H1 (cell line): ENCODE measurements at regions of chr14 and their contacts with region 1.

Region 1: GRCh38 chr14:100078991-100079725 is 13.9 kb downstream of the EVL start:
- DNase-seq: peak; percentile 17 to 71
- H3K4me3 ChIP-seq: no peak overlapping the region
- H3K27ac ChIP-seq: no peak overlapping the region
- H3K4me1 ChIP-seq: peaks cover 3 to 18% (median 4%) of the 10 kb centered on the region in 4 experiments; a peak in 6 of 7 replicates
- H3K27me3 ChIP-seq: no peaks in the 10 kb centered on the region; a peak in 1 of 7 replicates
- CTCF ChIP-seq: peak; percentile 13 to 45 (median 25)
- EP300 ChIP-seq: no peak
- POLR2A ChIP-seq: no peak
- RAD21 ChIP-seq: peak; percentile 27 to 55; a peak in 3 of 4 replicates

Region 2: DNA sequence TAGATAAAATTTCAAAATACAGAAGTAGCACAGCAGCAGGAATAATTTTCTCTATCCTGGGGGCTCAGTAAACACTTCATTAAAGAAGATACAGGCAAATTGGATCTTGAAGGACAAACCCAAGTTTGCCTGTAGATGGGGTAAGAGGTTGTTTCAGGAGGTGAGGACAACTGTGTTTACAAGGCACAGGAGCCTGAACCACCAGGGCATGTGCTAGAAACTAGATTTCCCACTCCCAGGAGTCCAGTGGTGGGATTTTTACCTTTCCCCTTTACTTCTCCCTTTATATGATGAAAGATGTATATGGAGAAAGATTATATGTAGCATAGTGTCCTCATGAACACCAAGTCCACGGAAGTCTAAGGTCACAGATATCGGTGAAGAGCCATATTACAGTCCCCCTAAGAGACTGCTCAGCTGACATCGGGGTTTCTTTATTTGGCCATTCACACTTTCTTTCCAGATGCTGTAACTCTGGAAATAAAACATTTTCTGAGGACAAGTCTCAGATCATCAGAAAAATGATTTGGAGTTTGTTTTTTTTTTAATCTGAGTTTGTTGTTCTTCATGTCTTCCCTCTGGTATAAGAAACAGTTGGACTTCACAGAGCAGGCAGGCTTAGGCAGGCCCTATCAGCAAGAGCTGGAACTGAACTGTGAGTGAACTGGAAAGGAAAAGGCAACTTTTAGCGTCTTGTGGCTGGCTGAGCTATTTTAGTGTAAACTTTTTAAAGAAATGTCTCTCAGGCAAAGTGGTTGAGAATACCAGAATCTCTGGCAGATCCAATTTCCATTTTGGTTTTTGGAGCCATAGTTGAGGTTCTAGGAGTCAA is 22.0 kb before region 1 on chr14:
- CTCF ChIA-PET with region 1: interaction called, 14 read pairs
- POLR2A ChIA-PET with region 1: interaction called, 3 read pairs
- DNase-seq: no peak
- H3K4me3 ChIP-seq: no peak overlapping the region
- H3K27ac ChIP-seq: no peak overlapping the region
- H3K4me1 ChIP-seq: no peaks in the 10 kb centered on the region
- H3K27me3 ChIP-seq: no peaks in the 10 kb centered on the region
- CTCF ChIP-seq: peak in 2 of 3 experiments; percentile 54 to 55; a peak in 3 of 4 replicates
- EP300 ChIP-seq: no peak
- POLR2A ChIP-seq: no peak
- RAD21 ChIP-seq: peak; percentile 56 to 64

Region 3: DNA sequence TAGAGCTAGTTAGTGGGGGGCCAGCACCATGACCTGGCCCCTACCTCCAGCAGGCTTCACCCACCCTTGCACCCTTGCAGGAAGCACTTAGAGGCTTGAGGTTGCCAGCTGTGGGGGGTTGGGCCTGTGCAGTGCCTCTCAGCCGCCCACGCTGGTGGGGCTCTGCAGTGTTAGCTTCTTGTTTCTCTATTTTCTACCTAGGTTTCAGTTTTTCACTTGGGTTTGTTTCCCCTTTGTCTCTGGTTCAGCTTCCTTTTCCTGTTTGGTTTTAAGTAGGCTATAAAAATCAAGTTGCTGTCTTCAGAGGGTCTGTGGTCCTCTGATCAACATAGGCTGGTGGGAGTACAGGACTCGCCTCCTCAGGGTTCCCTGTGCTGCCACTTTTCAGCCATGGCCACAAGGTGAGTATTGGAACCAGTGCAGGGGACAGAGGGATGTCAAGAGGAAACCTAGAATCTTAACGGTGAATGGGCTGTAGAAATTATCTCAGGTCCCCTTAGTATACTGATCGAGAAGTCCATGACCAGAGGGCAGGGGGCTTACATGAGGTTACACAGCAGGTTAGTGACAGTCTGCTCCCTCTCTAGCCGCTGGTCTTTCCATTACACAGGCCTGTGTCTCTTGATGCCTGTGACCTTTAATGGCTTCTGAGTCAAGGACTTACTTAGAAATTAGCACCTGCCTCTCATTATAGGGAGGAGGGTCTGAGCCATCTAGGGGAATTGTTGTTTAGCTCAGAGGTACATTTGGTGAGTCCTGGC is 13.9 kb before region 1 on chr14 and contains the start of gene EVL:
- CTCF ChIA-PET with region 1: interaction called, 11 read pairs
- POLR2A ChIA-PET with region 1: no interaction called
- DNase-seq: no peak
- H3K4me3 ChIP-seq: no peak within 1 kb of the TSS
- H3K27ac ChIP-seq: no peak within 1 kb of the TSS
- H3K4me1 ChIP-seq: no peaks in the 10 kb centered on the region
- H3K27me3 ChIP-seq: no peaks in the 10 kb centered on the region
- CTCF ChIP-seq: no peak
- EP300 ChIP-seq: no peak
- POLR2A ChIP-seq: no peak
- RAD21 ChIP-seq: no peak
- total RNA-seq, gene EVL: 64.0 and 64.6 TPM in 2 replicates

Region 4: GRCh38 chr14:100096570-100096971 is 17.4 kb after region 1 on chr14:
- CTCF ChIA-PET with region 1: interaction called, 240 read pairs
- POLR2A ChIA-PET with region 1: interaction called, 3 read pairs
- DNase-seq: no peak
- H3K4me3 ChIP-seq: no peak overlapping the region
- H3K27ac ChIP-seq: no peak overlapping the region
- H3K4me1 ChIP-seq: no peaks in the 10 kb centered on the region
- H3K27me3 ChIP-seq: no peaks in the 10 kb centered on the region
- CTCF ChIP-seq: no peak
- EP300 ChIP-seq: no peak
- POLR2A ChIP-seq: no peak
- RAD21 ChIP-seq: no peak